Endothelial cell of umbilical vein (primary cell): ENCODE measurements at regions of chr4 and their contacts with region 1.

Region 1: DNA sequence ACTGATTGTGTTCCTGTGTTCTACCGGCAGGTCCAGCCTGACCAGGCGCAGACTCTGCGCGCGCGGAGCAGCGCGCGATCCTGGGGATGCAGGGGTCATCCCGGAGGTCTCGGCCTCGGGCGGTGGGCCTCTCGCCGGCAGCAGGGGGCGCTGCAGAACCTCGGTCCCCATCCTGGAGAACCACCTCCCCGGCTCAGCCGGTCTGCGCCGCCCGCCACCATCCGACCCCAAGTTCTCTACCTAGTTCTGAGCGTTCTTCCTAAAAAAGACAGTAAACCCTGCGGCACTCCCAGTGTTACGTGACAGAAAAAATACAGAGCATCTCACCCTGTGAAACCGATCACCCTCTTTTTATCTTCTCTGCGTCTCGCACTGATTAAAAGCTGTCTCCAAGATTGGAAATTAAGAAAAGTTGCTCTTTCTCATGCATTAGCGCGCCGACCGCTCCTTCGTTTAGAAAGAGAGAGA is 1.6 kb downstream of the TRPC3 start:
- DNase-seq: peak; percentile 56
- H3K4me3 ChIP-seq: peak overlapping the region; percentile 35 to 73 (median 61)
- H3K27ac ChIP-seq: no peak overlapping the region
- H3K4me1 ChIP-seq: peaks cover 9% of the 10 kb centered on the region
- H3K27me3 ChIP-seq: peaks cover 29 to 38% of the 10 kb centered on the region in 2 experiments
- CTCF ChIP-seq: peak; percentile 77 to 92
- POLR2A ChIP-seq: no peak

Region 2: GRCh38 chr4:121472937-121473721 is 477.1 kb before region 1 on chr4:
- CTCF ChIA-PET with region 1: no interaction called
- POLR2A ChIA-PET with region 1: no interaction called
- dilution Hi-C with region 1: no loop called
- intact Hi-C with region 1: no loop called
- DNase-seq: no peak
- H3K4me3 ChIP-seq: no peak overlapping the region
- H3K27ac ChIP-seq: no peak overlapping the region
- H3K4me1 ChIP-seq: no peaks in the 10 kb centered on the region
- H3K27me3 ChIP-seq: no peaks in the 10 kb centered on the region
- CTCF ChIP-seq: no peak
- POLR2A ChIP-seq: no peak

Region 3: DNA sequence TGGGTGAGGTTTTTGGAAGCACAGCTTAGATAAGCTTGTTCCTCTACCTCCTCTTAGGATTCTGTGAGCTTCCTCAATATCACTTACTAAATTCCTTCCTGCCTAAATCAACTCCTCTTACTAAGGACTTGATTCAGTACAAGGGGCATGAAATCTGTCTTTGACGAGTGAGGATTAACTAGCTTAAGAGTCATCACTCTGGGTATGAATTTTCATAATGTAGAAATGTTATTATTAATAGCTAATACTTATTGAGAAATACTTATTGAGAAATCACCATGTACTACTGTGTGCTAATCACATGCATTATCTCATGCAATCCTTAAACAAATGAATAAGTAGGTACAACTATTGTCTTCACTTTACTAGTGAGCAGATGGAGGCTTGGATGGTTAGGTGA is 26.9 kb before region 1 on chr4:
- CTCF ChIA-PET with region 1: no interaction called
- POLR2A ChIA-PET with region 1: no interaction called
- dilution Hi-C with region 1: no loop called
- intact Hi-C with region 1: no loop called
- DNase-seq: no peak
- H3K4me3 ChIP-seq: no peak overlapping the region
- H3K27ac ChIP-seq: no peak overlapping the region
- H3K4me1 ChIP-seq: no peaks in the 10 kb centered on the region
- H3K27me3 ChIP-seq: peaks cover 2 to 3% of the 10 kb centered on the region in 2 experiments
- CTCF ChIP-seq: no peak
- POLR2A ChIP-seq: no peak

Region 4: DNA sequence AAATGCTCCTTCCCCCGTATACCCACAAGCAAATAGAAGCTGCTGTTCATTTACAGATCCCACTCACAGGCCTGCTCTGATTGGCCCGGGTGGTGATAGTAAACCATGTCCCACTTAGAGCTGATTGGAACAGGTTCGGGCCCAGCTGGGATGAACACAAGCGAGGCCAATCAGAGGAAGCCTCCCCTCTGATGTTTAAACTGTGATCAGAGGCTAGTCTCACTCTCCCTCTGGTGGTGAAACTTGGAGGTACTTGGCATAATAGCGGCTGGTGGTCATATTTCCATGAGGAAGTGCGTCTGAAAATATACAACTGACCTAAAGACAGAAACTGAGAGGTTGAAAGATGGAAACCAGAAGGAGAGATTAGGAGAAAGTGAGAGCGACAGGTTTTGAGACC is 53.1 kb after region 1 on chr4:
- CTCF ChIA-PET with region 1: no interaction called
- POLR2A ChIA-PET with region 1: no interaction called
- dilution Hi-C with region 1: no loop called
- intact Hi-C with region 1: loop called (anchors 1 kb)
- DNase-seq: peak; percentile 25
- H3K4me3 ChIP-seq: no peak overlapping the region
- H3K27ac ChIP-seq: no peak overlapping the region
- H3K4me1 ChIP-seq: no peaks in the 10 kb centered on the region
- H3K27me3 ChIP-seq: peaks cover 2 to 6% of the 10 kb centered on the region in 2 experiments
- CTCF ChIP-seq: peak; percentile 37 to 45
- POLR2A ChIP-seq: no peak

Region 5: DNA sequence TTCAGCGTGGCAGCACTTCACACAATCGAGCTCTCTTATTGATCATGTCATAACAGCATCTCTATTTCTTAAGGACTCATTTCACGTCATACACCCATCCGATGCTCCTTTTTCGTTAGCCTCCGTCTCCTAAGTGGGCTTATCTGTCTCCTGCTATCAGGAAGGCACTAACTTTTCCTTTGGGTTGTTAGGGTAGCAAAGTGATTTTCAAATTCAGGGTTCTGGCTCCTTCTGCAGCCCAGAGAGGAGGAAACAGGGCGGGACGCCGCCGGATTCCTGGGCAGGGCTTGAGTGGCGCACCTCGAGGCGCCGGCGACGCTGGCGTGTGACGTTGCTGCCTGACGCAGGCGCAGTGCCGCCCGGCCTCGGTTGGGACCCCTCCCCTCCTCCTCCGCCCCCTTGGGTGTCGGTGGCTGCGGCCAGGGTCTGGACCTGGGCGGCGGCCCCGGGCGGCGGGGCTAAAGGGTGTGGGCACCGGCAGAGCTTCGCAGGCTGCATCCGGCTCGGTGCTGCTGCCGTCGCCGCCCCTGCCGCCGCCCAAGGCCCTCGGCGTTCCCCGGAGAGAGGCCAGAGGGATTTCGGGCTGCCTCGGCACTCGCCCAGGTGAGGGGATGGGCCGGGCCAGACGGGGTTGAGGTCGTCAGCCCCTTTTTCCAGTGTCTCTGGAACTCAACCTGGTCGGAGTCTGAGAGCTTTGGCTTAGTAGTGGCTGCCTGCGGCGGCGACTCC is 201.9 kb after region 1 on chr4 and contains the start of gene BLTP1:
- CTCF ChIA-PET with region 1: no interaction called
- POLR2A ChIA-PET with region 1: no interaction called
- dilution Hi-C with region 1: no loop called
- intact Hi-C with region 1: loop called (anchors 5 kb)
- DNase-seq: peak; percentile 89
- H3K4me3 ChIP-seq: peak within 1 kb of the TSS; percentile 52 to 79 (median 73)
- H3K27ac ChIP-seq: peak within 1 kb of the TSS; percentile 50
- H3K4me1 ChIP-seq: peaks cover 6% of the 10 kb centered on the region
- H3K27me3 ChIP-seq: peaks cover 0 to 2% of the 10 kb centered on the region in 2 experiments
- CTCF ChIP-seq: no peak
- POLR2A ChIP-seq: peak; percentile 80
- total RNA-seq, gene BLTP1: 37.5 and 47.1 TPM in 2 replicates

Region 6: GRCh38 chr4:122224348-122224747 is 274.1 kb after region 1 on chr4:
- CTCF ChIA-PET with region 1: no interaction called
- POLR2A ChIA-PET with region 1: no interaction called
- dilution Hi-C with region 1: no loop called
- intact Hi-C with region 1: loop called (anchors 5 kb)
- DNase-seq: peak; percentile 17
- H3K4me3 ChIP-seq: no peak overlapping the region
- H3K27ac ChIP-seq: no peak overlapping the region
- H3K4me1 ChIP-seq: no peaks in the 10 kb centered on the region
- H3K27me3 ChIP-seq: no peaks in the 10 kb centered on the region
- CTCF ChIP-seq: peak; percentile 16 to 17
- POLR2A ChIP-seq: no peak

Region 7: GRCh38 chr4:122922877-122923511 is 972.7 kb after region 1 on chr4:
- CTCF ChIA-PET with region 1: no interaction called
- POLR2A ChIA-PET with region 1: no interaction called
- dilution Hi-C with region 1: no loop called
- intact Hi-C with region 1: loop called (anchors 5 kb)
- DNase-seq: peak; percentile 92
- H3K4me3 ChIP-seq: peak overlapping the region; percentile 75 to 90 (median 81)
- H3K27ac ChIP-seq: peak overlapping the region; percentile 26
- H3K4me1 ChIP-seq: peaks cover 18% of the 10 kb centered on the region
- H3K27me3 ChIP-seq: no peaks in the 10 kb centered on the region
- CTCF ChIP-seq: no peak
- POLR2A ChIP-seq: peak; percentile 41